ENCODE measurements at regions of chr20 and their contacts with region 1.

Region 1: GRCh38 chr20:23147964-23148730 is 62.0 kb upstream of the CD93 start:
- DNase-seq: peak; percentile 80
- H3K4me3 Mint-ChIP-seq: peak overlapping the region; percentile 28
- H3K27ac Mint-ChIP-seq: peak overlapping the region; percentile 89
- H3K4me1 Mint-ChIP-seq: peaks cover 55% of the 10 kb centered on the region
- H3K27me3 Mint-ChIP-seq: no peaks in the 10 kb centered on the region
- CTCF ChIP-seq: no peak

Region 2: DNA sequence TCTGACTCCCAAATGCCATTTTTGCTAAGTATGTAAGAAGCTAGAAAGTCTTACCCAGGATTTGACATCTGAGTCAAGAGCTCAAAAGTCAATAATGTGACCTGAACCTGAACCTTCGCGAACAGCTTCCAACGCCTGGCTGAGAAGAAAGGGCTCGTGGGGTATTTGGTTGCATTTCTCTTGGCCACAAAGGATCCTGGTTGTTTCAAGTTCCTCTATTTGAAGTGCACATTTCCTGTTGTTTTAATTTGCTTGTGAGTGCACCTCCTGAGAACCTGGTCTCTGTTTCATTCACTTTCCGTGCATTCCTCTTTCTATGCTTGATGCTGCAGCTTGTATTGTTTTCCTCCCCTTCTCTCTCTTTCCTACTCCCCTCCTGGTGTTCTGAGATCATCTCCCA is 776.3 kb before region 1 on chr20:
- CTCF ChIA-PET with region 1: no interaction called
- POLR2A ChIA-PET with region 1: no interaction called
- intact Hi-C with region 1: loop called (anchors 10 kb)
- DNase-seq: no peak
- H3K4me3 Mint-ChIP-seq: no peak overlapping the region
- H3K27ac Mint-ChIP-seq: no peak overlapping the region
- H3K4me1 Mint-ChIP-seq: peaks cover 37% of the 10 kb centered on the region
- H3K27me3 Mint-ChIP-seq: no peaks in the 10 kb centered on the region
- CTCF ChIP-seq: no peak

Measured in MCF 10A (cell line).